ENCODE measurements at regions of chr3 and their contacts with region 1.

Region 1: GRCh38 chr3:50568947-50569749 is at the start of gene HEMK1:
- DNase-seq: peak; percentile 99
- CTCF ChIP-seq: no peak

Region 2: DNA sequence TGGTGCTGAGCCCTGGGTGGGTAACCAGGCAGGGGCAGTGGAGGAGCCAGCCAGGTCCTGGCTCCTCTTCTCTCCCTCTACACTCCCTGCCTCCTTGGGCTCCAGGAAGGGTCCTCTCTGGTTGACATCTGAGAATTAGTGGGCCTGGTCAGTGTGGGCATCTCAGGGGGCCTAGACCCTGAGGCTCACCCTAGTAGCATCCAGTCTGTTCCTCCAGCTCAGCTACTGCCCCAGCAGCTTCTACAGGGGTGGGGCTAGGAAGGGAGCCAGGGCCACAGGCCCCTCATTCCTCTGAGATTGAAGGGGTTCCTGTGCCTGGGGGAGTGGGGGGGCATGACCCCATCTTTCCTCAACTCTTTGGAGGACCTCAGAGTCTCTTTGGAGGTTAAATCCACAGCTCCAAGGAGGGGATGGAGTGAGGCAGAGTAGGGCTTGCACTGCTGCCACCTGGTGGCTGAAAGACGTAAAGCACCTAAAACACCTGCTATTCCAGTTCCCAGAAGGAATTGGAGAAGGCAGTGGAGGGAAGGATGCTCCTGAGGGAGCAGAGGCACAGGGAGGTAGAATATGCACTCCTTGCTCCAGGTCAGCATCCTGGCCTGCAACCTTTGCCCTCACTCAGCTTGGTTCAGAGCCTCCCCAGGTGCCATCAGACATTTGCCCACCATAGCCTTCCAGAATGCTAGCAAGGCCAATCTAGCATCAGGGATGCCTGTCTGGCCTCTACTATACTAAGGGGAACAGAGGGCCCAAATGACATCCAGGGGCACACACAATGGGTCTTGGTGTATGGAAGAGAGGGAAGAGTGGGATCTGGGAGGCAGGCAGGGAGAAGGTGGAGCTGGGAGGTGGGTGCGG is 26.7 kb before region 1 on chr3:
- CTCF ChIA-PET with region 1: interaction called, 14 read pairs
- POLR2A ChIA-PET with region 1: no interaction called
- DNase-seq: peak; percentile 85
- CTCF ChIP-seq: peak; percentile 82

Region 3: DNA sequence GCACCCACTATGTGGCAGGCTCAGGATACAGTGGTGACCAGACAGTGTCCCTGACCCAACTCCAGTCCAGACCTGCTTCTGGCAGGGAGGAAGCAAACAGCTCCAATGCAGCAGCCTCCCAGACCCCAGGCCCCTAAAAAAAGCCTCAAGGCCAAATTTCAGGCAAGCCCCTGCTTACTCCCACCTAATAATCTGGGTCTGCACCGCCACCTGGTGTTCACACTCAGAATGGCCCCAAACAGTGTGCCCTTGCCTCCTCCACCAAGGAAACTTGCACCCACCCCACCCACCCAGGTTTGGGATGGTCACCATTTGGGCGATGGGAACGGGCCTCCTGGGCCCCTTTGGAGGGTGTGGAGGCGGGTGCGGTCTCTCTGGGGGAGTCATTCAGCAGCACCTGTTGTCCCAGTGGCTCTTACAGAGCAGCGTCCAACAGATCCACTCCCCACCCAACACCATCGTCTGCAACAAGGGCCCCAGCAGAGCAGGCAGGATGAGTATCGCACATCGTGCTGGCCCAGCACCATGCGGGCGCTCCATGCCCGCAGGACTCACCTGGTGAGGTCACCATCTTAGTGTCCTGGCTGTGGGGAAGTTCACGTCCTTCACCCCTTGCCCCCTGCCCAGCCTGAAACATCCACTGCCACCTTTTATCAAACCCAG is 18.9 kb before region 1 on chr3:
- CTCF ChIA-PET with region 1: interaction called, 12 read pairs
- POLR2A ChIA-PET with region 1: no interaction called
- DNase-seq: peak; percentile 79
- CTCF ChIP-seq: peak; percentile 75

Region 4: DNA sequence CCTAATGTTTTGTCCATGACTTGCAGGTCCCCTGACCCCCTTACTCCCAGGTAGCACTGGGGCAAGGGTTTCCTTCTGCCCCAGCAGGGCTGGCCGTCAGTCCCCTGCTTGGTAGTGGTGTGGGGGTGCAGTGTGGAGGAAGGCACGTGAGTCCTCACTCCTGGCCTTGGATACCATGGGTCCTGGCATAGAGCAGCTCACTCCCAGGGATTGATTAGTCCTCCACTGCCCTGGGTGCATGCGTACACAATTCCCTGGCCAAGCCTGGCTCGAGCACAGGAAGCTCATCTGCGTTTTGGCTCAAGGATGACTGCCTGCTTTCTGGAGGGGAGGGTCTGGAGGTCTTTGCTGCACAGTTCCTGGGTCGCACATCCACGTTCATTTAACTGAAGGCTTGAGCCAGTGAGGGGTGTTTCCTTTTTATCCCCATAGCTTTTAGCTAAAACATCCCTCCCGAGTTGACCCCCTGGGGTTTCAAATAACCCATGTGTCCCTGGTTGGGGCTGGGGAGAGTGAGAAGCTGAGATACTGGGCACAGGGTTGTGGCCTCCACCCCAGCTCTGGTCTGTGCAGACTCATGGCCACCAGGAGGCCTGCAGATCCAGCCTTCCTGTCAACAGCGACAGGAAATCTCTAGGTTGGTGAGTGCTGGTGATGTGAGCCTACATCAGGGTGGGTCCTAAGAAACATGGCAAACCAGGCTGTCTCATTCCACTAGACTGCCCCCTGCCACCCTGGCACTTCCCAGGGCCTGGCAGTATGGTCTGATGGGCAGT is 11.7 kb after region 1 on chr3:
- CTCF ChIA-PET with region 1: interaction called, 113 read pairs
- POLR2A ChIA-PET with region 1: no interaction called
- DNase-seq: no peak
- CTCF ChIP-seq: no peak

Region 5: GRCh38 chr3:50587806-50588758 is 18.9 kb after region 1 on chr3:
- CTCF ChIA-PET with region 1: interaction called, 113 read pairs
- POLR2A ChIA-PET with region 1: interaction called, 4 read pairs
- DNase-seq: peak; percentile 69
- CTCF ChIP-seq: no peak

Region 6: GRCh38 chr3:50600841-50601591 is 31.9 kb after region 1 on chr3:
- CTCF ChIA-PET with region 1: interaction called, 18 read pairs
- POLR2A ChIA-PET with region 1: no interaction called
- DNase-seq: peak; percentile 68
- CTCF ChIP-seq: no peak

Region 7: DNA sequence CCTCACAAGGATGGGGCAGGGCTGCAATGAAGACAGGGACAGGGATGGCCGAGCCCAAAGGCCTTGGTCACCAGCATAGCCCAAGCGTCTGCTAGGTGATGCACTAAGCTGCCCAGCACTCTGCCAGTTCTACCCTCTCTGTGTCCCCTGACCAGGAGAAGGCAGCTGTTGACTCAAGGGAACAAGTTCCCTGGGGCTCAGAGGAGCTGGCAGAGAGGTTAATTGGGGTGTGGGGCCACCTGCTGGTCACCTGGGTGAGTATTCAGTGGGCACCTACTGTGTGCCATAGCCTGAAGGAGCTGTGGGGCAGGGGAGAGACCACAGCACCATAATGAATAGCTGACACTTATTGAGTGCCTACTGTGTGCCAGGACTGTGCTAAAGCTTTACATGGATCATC is 83.6 kb after region 1 on chr3:
- CTCF ChIA-PET with region 1: interaction called, 29 read pairs
- POLR2A ChIA-PET with region 1: no interaction called
- DNase-seq: peak; percentile 66
- CTCF ChIP-seq: peak; percentile 64